ENCODE measurements at regions of chr12 and their contacts with region 1.

Region 1: GRCh38 chr12:43282106-43282505 is 269.9 kb downstream of the ADAMTS20 start:
- DNase-seq: no peak
- ATAC-seq: no peak
- H3K4me3 ChIP-seq: no peak overlapping the region
- H3K27ac ChIP-seq: no peak overlapping the region; the same call in 1 of the 2 replicates
- H3K4me1 ChIP-seq: no peaks in the 10 kb centered on the region; the same call in 1 of the 2 replicates
- H3K27me3 ChIP-seq: no peaks in the 10 kb centered on the region
- CTCF ChIP-seq: no peak

Region 2: DNA sequence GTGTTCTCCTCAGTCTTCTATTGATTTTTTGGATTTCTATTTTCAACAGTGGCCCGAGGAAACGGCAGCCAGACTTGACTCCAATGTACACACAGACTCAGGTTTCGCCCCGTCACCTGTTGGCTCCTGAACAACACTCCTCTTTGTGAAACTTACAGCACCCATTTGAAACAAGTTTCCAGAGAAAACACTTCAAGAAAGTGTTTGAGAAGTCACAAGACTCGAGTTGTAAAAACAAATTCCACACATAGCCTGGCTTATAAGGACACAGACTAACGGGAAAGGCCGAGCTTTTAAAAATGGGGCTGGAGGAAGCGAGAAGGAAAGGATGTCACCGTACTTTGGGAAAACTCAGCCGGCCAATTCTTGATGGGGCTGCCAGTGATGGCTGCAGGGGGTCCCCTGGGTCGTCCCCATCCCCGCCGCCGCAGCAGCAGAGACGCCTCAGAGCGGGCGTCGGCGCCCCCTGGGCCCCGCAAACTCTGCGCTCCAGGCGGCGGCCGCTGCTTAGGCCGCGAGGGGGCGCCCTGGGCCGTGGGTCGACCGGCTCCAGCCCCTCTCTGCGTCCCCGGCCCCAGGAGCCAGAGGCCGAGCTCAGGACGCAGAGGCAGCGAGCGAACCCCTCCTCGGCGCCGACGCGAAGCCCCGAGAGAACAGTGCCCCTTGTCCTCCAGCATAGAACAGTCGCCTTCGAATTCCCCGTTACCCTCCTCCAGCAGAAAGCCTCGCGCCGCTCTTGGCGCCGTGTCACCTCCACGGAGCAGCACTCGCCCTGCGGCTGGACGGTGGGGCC is 799.5 kb before region 1 on chr12:
- CTCF ChIA-PET with region 1: interaction called, 4 read pairs
- POLR2A ChIA-PET with region 1: no interaction called
- in situ Hi-C with region 1: no loop called
- intact Hi-C with region 1: loop called (anchors 5 kb)
- DNase-seq: no peak
- ATAC-seq: peak; percentile 93
- H3K4me3 ChIP-seq: peak overlapping the region; percentile 54 to 65
- H3K27ac ChIP-seq: peak overlapping the region; percentile 71
- H3K4me1 ChIP-seq: peaks cover 15% of the 10 kb centered on the region; the same call in 1 of the 2 replicates
- H3K27me3 ChIP-seq: peaks cover 16% of the 10 kb centered on the region
- CTCF ChIP-seq: peak; percentile 98

Region 3: DNA sequence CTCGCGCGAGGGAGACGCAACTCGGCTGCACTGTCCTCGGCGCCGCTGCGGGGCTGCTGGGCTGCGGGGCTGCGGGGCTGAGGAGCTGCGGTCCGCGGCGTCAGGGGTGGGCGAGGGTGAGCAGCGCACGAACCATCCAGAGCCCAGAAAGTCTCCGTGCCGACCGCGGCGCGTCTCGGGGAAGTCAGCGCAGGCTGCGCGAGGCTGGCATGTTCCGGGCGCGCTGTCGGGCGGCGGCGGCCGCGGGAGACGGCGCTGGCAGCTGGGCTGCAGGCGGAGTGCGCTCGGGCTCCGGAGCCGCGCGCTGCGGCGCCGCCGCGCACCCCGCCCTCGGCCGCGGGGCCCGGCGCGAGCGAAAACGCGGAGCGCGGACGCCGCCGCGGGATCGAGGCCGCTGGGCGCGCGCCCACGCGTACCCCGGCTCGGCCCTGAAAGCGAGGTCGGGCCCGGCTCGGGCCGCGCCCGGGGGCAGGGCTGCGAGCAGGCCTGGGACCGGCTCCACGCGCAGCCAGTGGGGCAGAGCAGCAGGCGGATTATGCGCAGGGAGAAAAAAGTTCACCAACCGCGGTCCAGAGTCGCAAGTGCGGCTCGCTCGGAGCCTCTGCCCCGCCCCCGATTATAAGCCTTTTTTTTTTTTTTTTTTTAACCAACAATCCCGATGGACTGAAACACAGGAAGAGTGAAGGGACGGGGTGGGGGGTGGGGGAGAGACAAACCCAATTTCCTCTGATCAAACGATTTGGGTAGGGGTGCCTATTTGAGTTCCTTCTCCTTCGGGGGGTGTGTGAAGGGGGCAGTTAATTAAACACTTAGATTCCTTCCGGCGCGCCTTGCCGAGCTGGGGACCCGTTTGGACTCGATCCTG is 692.4 kb before region 1 on chr12 and contains the start of gene PRICKLE1:
- CTCF ChIA-PET with region 1: no interaction called
- POLR2A ChIA-PET with region 1: no interaction called
- in situ Hi-C with region 1: no loop called
- intact Hi-C with region 1: loop called (anchors 5 kb)
- DNase-seq: no peak
- ATAC-seq: peak; percentile 79
- H3K4me3 ChIP-seq: peak within 1 kb of the TSS; percentile 64 to 67
- H3K27ac ChIP-seq: peak within 1 kb of the TSS; percentile 77
- H3K4me1 ChIP-seq: peaks cover 19% of the 10 kb centered on the region
- H3K27me3 ChIP-seq: peaks cover 15% of the 10 kb centered on the region
- CTCF ChIP-seq: no peak
- total RNA-seq, gene PRICKLE1: 20.1 TPM

Region 4: GRCh38 chr12:42809226-42809625 is 472.9 kb before region 1 on chr12:
- CTCF ChIA-PET with region 1: no interaction called
- POLR2A ChIA-PET with region 1: no interaction called
- in situ Hi-C with region 1: no loop called
- intact Hi-C with region 1: loop called (anchors 10 kb)
- DNase-seq: no peak
- ATAC-seq: no peak
- H3K4me3 ChIP-seq: no peak overlapping the region
- H3K27ac ChIP-seq: no peak overlapping the region; the same call in 1 of the 2 replicates
- H3K4me1 ChIP-seq: no peaks in the 10 kb centered on the region
- H3K27me3 ChIP-seq: no peaks in the 10 kb centered on the region
- CTCF ChIP-seq: no peak

Region 5: GRCh38 chr12:43416981-43417380 is 134.9 kb after region 1 on chr12:
- CTCF ChIA-PET with region 1: no interaction called
- POLR2A ChIA-PET with region 1: no interaction called
- in situ Hi-C with region 1: no loop called
- intact Hi-C with region 1: no loop called
- DNase-seq: no peak
- ATAC-seq: no peak
- H3K4me3 ChIP-seq: no peak overlapping the region
- H3K27ac ChIP-seq: no peak overlapping the region
- H3K4me1 ChIP-seq: no peaks in the 10 kb centered on the region
- H3K27me3 ChIP-seq: no peaks in the 10 kb centered on the region
- CTCF ChIP-seq: no peak

Region 6: DNA sequence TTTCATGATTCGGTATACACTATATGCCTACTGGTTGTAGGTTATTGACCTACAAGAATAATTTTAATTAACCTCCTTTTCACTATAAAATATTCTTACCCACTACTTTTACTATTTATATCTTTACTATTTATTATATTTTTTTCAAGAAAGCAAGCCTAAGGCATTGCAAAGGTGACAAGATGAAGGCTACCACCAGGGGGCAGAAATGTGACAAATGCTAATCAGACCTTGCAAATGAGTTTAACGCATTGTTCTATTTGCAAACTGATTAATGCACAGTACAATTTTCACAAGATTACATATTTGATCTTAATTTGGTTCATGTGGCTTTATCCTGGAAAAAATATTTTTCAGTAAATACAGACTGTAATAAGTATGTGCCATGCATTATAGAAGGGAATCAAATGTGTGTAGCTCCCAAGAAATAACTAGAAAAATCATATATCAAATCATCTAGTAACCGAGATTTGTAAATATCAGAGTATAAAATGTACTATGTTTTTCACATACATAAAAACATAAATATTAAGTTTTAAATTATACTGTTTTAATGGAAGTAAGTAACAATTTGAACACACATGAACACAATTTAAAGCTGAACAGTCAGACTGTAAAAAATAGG is 162.9 kb after region 1 on chr12:
- CTCF ChIA-PET with region 1: no interaction called
- POLR2A ChIA-PET with region 1: no interaction called
- in situ Hi-C with region 1: no loop called
- intact Hi-C with region 1: no loop called
- DNase-seq: peak; percentile 18
- ATAC-seq: no peak; the same call in 1 of the 2 replicates
- H3K4me3 ChIP-seq: no peak overlapping the region
- H3K27ac ChIP-seq: no peak overlapping the region
- H3K4me1 ChIP-seq: no peaks in the 10 kb centered on the region
- H3K27me3 ChIP-seq: no peaks in the 10 kb centered on the region
- CTCF ChIP-seq: peak; percentile 77; the same call in 1 of the 2 replicates